ENCODE measurements at regions of chr19 and their contacts with region 1.

Region 1: GRCh38 chr19:2578901-2579677 is 103.2 kb downstream of the GADD45B start:
- DNase-seq: peak; percentile 90
- ATAC-seq: peak; percentile 80
- H3K4me3 ChIP-seq: peak overlapping the region; percentile 54 to 71 (median 61)
- H3K27ac ChIP-seq: peak overlapping the region; percentile 91
- H3K4me1 ChIP-seq: peaks cover 54% of the 10 kb centered on the region
- H3K27me3 ChIP-seq: no peaks in the 10 kb centered on the region
- CTCF ChIP-seq: peak; percentile 97
- EP300 ChIP-seq: peak in 1 of 2 experiments; percentile 44; a peak in 2 of 4 replicates
- POLR2A ChIP-seq: peak in 1 of 2 experiments; percentile 59; a peak in 2 of 4 replicates
- RAD21 ChIP-seq: peak; percentile 95

Region 2: GRCh38 chr19:2524838-2525723 is 54.0 kb before region 1 on chr19:
- CTCF ChIA-PET with region 1: no interaction called
- POLR2A ChIA-PET with region 1: interaction called, 4 read pairs
- in situ Hi-C with region 1: no loop called
- intact Hi-C with region 1: loop called (anchors 5 kb)
- DNase-seq: peak; percentile 68
- ATAC-seq: peak; percentile 79
- H3K4me3 ChIP-seq: peak overlapping the region in 2 of 3 experiments; percentile 42 to 57; a peak in 5 of 6 replicates
- H3K27ac ChIP-seq: no peak overlapping the region
- H3K4me1 ChIP-seq: peaks cover 84% of the 10 kb centered on the region
- H3K27me3 ChIP-seq: no peaks in the 10 kb centered on the region
- CTCF ChIP-seq: no peak
- EP300 ChIP-seq: no peak
- POLR2A ChIP-seq: no peak
- RAD21 ChIP-seq: no peak

Region 3: GRCh38 chr19:2552859-2553258 is 26.2 kb before region 1 on chr19:
- CTCF ChIA-PET with region 1: no interaction called
- POLR2A ChIA-PET with region 1: interaction called, 63 read pairs
- in situ Hi-C with region 1: no loop called
- intact Hi-C with region 1: no loop called
- DNase-seq: no peak
- ATAC-seq: no peak
- H3K4me3 ChIP-seq: no peak overlapping the region
- H3K27ac ChIP-seq: no peak overlapping the region
- H3K4me1 ChIP-seq: peaks cover 57% of the 10 kb centered on the region
- H3K27me3 ChIP-seq: no peaks in the 10 kb centered on the region
- CTCF ChIP-seq: no peak
- EP300 ChIP-seq: no peak
- POLR2A ChIP-seq: no peak
- RAD21 ChIP-seq: no peak

Region 4: GRCh38 chr19:2610637-2611482 is 31.8 kb after region 1 on chr19:
- CTCF ChIA-PET with region 1: interaction called, 7 read pairs
- POLR2A ChIA-PET with region 1: interaction called, 19 read pairs
- in situ Hi-C with region 1: no loop called
- intact Hi-C with region 1: no loop called
- DNase-seq: peak; percentile 70
- ATAC-seq: peak; percentile 92
- H3K4me3 ChIP-seq: peak overlapping the region; percentile 44 to 77 (median 62); a peak in 4 of 6 replicates
- H3K27ac ChIP-seq: no peak overlapping the region
- H3K4me1 ChIP-seq: peaks cover 16% of the 10 kb centered on the region; the same call in 1 of the 2 replicates
- H3K27me3 ChIP-seq: no peaks in the 10 kb centered on the region; a peak in 1 of 5 replicates
- CTCF ChIP-seq: peak; percentile 99
- EP300 ChIP-seq: no peak
- POLR2A ChIP-seq: no peak
- RAD21 ChIP-seq: peak; percentile 99